ENCODE measurements at regions of chr1 and their contacts with region 1.

Region 1: GRCh38 chr1:226083302-226084101 is 21.0 kb downstream of the H3-3A start:
- DNase-seq: peak; percentile 48
- ATAC-seq: peak; percentile 91
- H3K4me3 ChIP-seq: peak overlapping the region; percentile 57 to 75
- H3K27ac ChIP-seq: peak overlapping the region; percentile 84
- H3K4me1 ChIP-seq: peaks cover 2 to 18% of the 10 kb centered on the region in 2 experiments; a peak in 2 of 4 replicates
- H3K27me3 ChIP-seq: no peaks in the 10 kb centered on the region
- CTCF ChIP-seq: no peak
- POLR2A ChIP-seq: no peak
- RAD21 ChIP-seq: no peak

Region 2: DNA sequence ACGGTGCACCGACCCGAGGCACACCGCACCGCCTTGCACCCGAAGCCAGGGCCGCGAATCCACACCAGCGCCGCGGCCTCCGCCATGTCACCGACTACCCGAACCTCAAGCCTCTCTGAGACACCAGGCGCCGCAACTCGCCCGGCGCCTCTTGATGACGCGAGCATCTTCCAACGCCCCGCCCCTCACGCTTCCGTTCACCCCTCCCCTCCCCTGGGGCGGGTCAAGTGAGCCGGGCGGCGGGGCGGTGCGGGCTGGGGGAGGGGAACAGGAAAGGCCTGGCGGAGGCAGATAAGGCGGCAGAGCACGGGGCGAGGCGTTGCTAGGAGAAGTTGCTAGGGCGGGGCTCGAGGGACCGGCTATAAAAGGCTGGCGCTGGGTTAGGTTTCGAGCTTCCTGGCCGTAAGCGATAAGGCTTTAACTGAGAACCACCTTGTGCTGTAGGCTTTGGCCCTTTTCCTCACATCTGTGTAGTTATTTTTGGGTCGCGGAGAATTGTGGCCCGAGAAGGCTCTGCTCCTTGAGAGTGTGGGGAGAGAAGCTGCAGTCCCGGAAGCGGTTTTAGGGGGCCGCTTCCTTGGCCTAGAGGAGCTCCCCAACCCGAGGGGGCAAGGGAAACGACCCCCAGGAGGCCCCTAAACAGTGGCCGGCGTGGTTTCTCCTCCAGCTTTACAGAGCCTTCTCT is 84.1 kb before region 1 on chr1 and contains the start of gene SDE2:
- CTCF ChIA-PET with region 1: no interaction called
- POLR2A ChIA-PET with region 1: interaction called, 3 read pairs
- RAD21 ChIA-PET with region 1: no interaction called
- intact Hi-C with region 1: loop called (anchors 5 kb)
- DNase-seq: peak; percentile 97
- ATAC-seq: peak; percentile 96
- H3K4me3 ChIP-seq: peak within 1 kb of the TSS; percentile 96 to 98
- H3K27ac ChIP-seq: peak within 1 kb of the TSS; percentile 75
- H3K4me1 ChIP-seq: peaks cover 22 to 36% of the 10 kb centered on the region in 2 experiments
- H3K27me3 ChIP-seq: no peaks in the 10 kb centered on the region
- CTCF ChIP-seq: no peak
- POLR2A ChIP-seq: peak; percentile 98
- RAD21 ChIP-seq: no peak
- total RNA-seq, gene SDE2: 22.5 TPM